Endothelial cell of umbilical vein (primary cell): ENCODE measurements at regions of chr1 and their contacts with region 1.

Region 1: DNA sequence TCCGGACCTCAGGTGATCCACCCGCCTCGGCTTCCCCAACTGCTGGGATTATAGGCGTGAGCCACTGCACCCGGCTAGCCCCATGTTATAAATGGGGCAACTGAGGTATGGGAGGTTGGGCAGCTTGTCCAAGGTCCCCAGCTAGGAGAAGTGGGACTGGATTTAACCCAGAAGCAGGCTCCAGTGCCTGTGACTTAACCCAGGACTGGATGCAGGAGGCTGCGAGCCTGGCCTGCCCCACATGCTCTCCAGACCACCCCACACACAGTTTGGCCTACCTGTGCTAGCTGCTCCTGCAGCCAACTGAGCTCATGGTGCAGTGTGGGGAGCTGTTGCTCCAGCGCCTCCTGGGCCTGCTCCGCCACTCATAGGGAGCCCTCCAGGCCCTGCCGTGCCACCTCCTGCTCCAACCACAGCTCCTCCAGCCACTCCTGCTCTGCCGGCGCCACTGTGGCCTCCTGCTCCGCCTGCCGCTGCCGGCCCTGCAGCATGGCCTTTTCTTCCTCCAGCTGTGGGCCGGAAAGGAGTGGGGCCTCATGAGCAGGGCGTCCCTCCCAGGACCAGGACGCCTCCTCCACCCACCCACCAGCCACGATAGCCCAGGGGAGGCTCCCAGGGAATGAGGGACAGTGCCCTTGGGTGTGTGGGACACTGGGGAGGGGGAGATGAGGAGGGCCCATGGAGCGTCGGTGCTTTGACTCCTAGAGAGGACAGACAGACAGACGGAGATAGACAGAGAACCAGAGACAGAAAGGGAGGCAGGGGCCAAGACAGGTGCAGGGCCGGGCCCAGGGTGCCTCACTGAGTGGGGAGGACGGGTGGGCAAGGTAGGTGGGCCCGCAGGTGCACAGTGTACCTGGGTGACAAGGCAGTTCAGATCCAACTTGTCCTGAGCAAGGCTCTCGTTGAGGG is 12.4 kb upstream of the NBPF1 start:
- DNase-seq: no peak
- H3K4me3 ChIP-seq: no peak overlapping the region
- H3K27ac ChIP-seq: no peak overlapping the region
- H3K4me1 ChIP-seq: no peaks in the 10 kb centered on the region
- H3K27me3 ChIP-seq: no peaks in the 10 kb centered on the region
- CTCF ChIP-seq: no peak
- POLR2A ChIP-seq: no peak

Region 2: DNA sequence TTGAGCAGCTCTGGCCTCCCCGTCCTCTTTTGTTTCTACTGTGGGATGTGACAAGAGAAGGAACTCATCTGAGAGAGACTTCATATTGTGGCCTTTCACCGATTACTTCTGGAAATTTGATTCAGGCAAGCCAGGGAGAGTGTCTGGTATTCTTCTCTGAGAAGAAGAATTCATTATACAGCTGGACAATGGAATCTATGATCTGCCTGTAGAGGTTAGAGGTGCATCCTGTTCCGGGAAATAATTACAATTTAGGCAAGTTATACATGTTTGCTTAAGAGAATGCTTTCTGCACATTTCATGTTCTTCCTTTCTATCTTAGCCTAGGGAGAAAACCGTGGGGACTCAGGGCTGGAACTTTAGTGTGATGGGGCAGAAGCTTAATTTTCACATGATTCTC is 257.3 kb after region 1 on chr1:
- CTCF ChIA-PET with region 1: no interaction called
- POLR2A ChIA-PET with region 1: interaction called, 11 read pairs
- dilution Hi-C with region 1: no loop called
- intact Hi-C with region 1: no loop called
- DNase-seq: peak; percentile 56
- H3K4me3 ChIP-seq: no peak overlapping the region
- H3K27ac ChIP-seq: no peak overlapping the region
- H3K4me1 ChIP-seq: peaks cover 9% of the 10 kb centered on the region
- H3K27me3 ChIP-seq: peaks cover 22 to 30% of the 10 kb centered on the region in 2 experiments
- CTCF ChIP-seq: no peak
- POLR2A ChIP-seq: no peak